Activated naive CD4-positive, alpha-beta T cell treated with anti-CD3 and anti-CD28 coated beads for 36 hours (primary cell): ENCODE measurements at regions of chr1 and their contacts with region 1.

Region 1: DNA sequence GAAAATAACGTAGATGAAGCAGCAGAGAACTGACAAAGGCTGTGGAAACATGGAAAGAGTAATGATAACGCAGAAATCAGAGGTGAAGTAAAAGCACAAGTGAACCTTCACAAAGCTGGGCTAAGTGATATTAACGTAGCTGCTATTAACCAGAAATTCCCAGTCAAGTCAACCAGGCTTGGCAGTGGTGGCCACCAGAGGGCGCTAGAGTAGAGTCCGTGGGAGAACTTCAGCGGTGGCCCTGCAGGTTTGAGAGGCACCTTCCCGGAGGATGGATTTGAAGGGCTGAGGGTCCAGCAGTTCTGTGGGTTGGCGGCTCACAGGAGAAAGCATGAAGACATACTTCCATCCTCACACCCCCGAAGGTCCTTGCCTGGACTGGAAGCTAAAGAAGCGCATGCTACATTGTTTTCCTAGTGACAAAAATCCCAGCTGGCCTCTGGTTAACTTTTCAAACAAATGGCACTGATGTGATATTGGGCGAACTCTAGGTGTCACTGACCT is 81.7 kb upstream of the ZNF648 start:
- DNase-seq: peak; percentile 95
- H3K4me3 Mint-ChIP-seq: no peak overlapping the region
- H3K27ac Mint-ChIP-seq: no peak overlapping the region
- H3K4me1 Mint-ChIP-seq: peaks cover 11% of the 10 kb centered on the region
- H3K27me3 Mint-ChIP-seq: no peaks in the 10 kb centered on the region

Region 2: DNA sequence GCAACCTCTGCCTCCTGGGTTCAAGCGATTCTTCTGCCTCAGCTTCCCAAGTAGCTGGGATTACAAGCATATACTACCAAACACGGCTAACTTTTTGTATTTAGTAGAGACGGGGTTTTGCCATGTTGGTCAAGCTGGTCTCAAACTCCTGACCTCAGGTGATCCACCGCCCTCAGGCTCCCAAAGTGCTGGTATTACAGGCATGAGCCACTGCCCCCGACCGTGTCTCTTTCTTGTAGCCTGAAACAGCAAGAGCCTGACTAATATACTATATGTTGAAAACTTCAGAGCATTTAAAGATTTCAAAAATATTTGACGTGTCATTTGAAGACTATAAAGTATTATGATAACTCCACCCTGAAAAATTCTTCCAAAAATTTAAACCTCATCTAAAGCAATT is 10.0 kb before region 1 on chr1:
- CTCF ChIA-PET with region 1: interaction called, 10 read pairs
- intact Hi-C with region 1: no loop called
- DNase-seq: no peak
- H3K4me3 Mint-ChIP-seq: no peak overlapping the region
- H3K27ac Mint-ChIP-seq: no peak overlapping the region
- H3K4me1 Mint-ChIP-seq: peaks cover 9% of the 10 kb centered on the region
- H3K27me3 Mint-ChIP-seq: no peaks in the 10 kb centered on the region

Region 3: GRCh38 chr1:182198049-182198501 is 54.9 kb after region 1 on chr1:
- CTCF ChIA-PET with region 1: interaction called, 13 read pairs
- intact Hi-C with region 1: loop called (anchors 1 kb)
- DNase-seq: no peak
- H3K4me3 Mint-ChIP-seq: no peak overlapping the region
- H3K27ac Mint-ChIP-seq: no peak overlapping the region
- H3K4me1 Mint-ChIP-seq: no peaks in the 10 kb centered on the region
- H3K27me3 Mint-ChIP-seq: no peaks in the 10 kb centered on the region

Region 4: GRCh38 chr1:182291584-182292192 is 148.5 kb after region 1 on chr1:
- CTCF ChIA-PET with region 1: interaction called, 11 read pairs
- intact Hi-C with region 1: no loop called
- DNase-seq: no peak
- H3K4me3 Mint-ChIP-seq: no peak overlapping the region
- H3K27ac Mint-ChIP-seq: no peak overlapping the region
- H3K4me1 Mint-ChIP-seq: no peaks in the 10 kb centered on the region
- H3K27me3 Mint-ChIP-seq: no peaks in the 10 kb centered on the region

Region 5: DNA sequence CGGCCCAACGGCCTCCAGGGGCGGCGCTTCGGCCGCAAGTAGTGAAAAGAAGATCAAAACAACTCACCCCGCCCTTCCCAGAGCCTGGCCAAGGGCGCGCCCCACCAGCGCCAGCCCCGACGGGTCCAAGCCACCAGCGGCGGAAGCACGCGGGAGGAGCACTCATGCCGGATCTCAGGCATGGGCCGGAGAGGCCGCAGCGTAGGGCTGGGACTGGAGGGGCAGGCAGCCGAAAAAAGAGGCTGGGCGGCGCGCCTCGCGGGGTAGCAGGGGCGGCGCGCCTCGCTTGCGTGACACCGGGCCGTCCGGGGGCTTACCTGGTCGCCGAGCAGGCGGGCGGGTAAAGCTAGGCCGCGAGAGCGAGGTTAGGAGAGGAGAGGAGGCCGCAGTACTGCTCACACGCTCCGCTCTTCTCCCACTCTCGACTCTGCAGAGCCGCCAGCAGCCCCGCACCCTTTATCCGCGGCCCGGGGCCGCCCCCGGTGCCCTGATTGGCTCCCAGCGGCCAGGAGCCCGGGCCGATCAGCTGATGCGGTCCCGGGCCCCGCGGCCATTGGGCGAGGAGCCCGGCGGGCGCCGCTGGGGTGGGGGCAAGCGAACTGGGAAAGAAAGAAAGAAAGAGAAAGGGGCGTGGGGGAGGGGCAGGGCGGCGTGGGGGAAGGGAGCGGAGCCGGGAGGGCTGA is 248.3 kb after region 1 on chr1 and contains the start of gene GLUL:
- CTCF ChIA-PET with region 1: interaction called, 153 read pairs
- intact Hi-C with region 1: loop called (anchors 1 kb)
- DNase-seq: peak; percentile 76
- H3K4me3 Mint-ChIP-seq: peak within 1 kb of the TSS; percentile 87
- H3K27ac Mint-ChIP-seq: peak within 1 kb of the TSS; percentile 72
- H3K4me1 Mint-ChIP-seq: peaks cover 18% of the 10 kb centered on the region
- H3K27me3 Mint-ChIP-seq: no peaks in the 10 kb centered on the region
- total RNA-seq, gene GLUL: 71.5 to 73.1 TPM

Region 6: GRCh38 chr1:182397771-182398393 is 254.7 kb after region 1 on chr1:
- CTCF ChIA-PET with region 1: interaction called, 153 read pairs
- intact Hi-C with region 1: loop called (anchors 1 kb)
- DNase-seq: no peak
- H3K4me3 Mint-ChIP-seq: no peak overlapping the region
- H3K27ac Mint-ChIP-seq: no peak overlapping the region
- H3K4me1 Mint-ChIP-seq: no peaks in the 10 kb centered on the region
- H3K27me3 Mint-ChIP-seq: no peaks in the 10 kb centered on the region

Region 7: GRCh38 chr1:182588500-182589452 is 445.6 kb after region 1 on chr1 and contains the start of gene RNASEL:
- CTCF ChIA-PET with region 1: no interaction called
- intact Hi-C with region 1: loop called (anchors 10 kb)
- DNase-seq: peak; percentile 62
- H3K4me3 Mint-ChIP-seq: peak within 1 kb of the TSS; percentile 86
- H3K27ac Mint-ChIP-seq: peak within 1 kb of the TSS; percentile 98
- H3K4me1 Mint-ChIP-seq: peaks cover 49% of the 10 kb centered on the region
- H3K27me3 Mint-ChIP-seq: no peaks in the 10 kb centered on the region
- total RNA-seq, gene RNASEL: 2.5 TPM